Activated CD8-positive, alpha-beta T cell treated with anti-CD3 and anti-CD28 coated beads for 36 hours (primary cell): ENCODE measurements at regions of chrX and their contacts with region 1.

Region 1: DNA sequence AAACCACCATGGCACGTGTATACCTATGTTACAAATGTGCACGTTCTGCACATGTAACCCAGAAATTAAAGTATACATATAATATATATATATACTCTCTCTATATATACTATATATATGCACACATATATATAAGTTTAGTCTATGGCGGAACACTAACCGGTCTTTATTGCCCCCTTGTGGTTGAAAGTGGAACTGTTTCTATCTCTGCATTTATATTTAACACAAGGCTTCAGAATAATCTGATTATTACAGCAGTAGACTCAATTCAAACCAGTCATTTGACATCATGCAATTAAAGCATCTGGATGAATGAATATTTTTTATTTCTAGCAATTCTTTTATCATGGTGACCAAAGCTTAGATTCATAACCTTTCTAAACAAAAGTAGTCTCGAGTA is 14.6 kb downstream of the RAB9B start:
- DNase-seq: peak; percentile 19
- ATAC-seq: peak; percentile 80
- H3K4me3 Mint-ChIP-seq: no peak overlapping the region
- H3K27ac Mint-ChIP-seq: no peak overlapping the region
- H3K4me1 Mint-ChIP-seq: no peaks in the 10 kb centered on the region
- H3K27me3 Mint-ChIP-seq: peaks cover 14% of the 10 kb centered on the region
- CTCF ChIP-seq: peak; percentile 49

Region 2: GRCh38 chrX:103711533-103712369 is 105.8 kb before region 1 on chrX:
- CTCF ChIA-PET with region 1: interaction called, 7 read pairs
- POLR2A ChIA-PET with region 1: no interaction called
- intact Hi-C with region 1: loop called (anchors 5 kb)
- DNase-seq: peak; percentile 68
- ATAC-seq: peak; percentile 47
- H3K4me3 Mint-ChIP-seq: no peak overlapping the region
- H3K27ac Mint-ChIP-seq: no peak overlapping the region
- H3K4me1 Mint-ChIP-seq: no peaks in the 10 kb centered on the region
- H3K27me3 Mint-ChIP-seq: no peaks in the 10 kb centered on the region
- CTCF ChIP-seq: peak; percentile 62